Cardiac septum (tissue), 1 donor: ENCODE measurements at regions of chr17 and their contacts with region 1.

Region 1: DNA sequence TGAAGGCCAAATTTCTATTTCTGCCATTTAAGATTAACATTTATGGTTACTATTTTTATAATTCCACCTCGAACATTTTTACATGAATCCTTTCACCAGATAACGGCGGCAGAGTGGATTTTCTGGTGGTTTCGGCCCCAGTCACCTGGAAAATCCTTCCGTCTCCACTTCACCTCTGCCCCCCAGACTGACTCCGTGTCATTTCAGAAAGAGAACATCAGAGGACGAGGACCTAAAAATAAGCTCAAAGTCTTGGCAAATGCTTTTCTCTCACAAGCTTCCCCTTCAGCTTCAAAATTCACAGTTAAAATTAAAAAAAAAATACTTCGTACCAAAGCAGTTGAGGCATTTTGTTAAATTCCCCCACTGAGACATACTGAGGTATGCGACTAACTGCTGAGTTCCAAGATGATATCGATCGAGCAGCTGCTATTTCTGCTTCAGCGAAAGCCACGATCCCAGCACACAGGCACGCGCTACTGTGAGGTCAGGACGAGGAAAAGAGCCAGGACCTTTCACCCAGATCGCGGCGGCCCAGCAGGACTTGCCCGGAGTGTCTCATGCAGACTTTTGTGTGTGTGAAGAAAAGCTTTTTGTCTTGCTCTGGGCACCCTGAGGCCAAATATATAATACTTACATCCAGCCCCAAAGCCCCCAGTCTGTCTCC is 36.8 kb downstream of the ASPA start:
- DNase-seq: peak; percentile 87

Region 2: GRCh38 chr17:3474212-3474611 is 38.4 kb before region 1 on chr17:
- intact Hi-C with region 1: no loop called
- DNase-seq: no peak

Region 3: DNA sequence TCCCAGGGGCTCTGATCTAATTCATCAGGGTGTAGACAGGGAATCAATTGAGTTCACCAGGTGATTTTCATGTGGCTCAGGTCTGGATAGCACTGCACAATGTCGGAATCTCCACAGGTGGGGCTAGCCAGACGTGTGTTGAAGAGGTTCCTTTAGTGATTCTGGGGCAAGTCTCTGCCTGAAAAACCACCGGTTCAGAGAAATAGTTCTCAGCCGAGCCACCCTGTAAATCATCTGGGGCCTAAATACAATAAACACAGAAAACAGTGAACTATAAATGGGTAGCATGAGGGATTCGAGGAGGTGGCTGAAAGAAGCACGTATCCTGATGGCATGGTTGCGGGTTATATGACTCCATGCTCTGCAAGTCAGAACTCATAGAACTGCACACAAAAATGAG is 15.5 kb before region 1 on chr17:
- intact Hi-C with region 1: no loop called
- DNase-seq: no peak

Region 4: GRCh38 chr17:3529817-3530741 is 17.4 kb after region 1 on chr17:
- intact Hi-C with region 1: loop called (anchors 2 kb)
- DNase-seq: no peak

Region 5: DNA sequence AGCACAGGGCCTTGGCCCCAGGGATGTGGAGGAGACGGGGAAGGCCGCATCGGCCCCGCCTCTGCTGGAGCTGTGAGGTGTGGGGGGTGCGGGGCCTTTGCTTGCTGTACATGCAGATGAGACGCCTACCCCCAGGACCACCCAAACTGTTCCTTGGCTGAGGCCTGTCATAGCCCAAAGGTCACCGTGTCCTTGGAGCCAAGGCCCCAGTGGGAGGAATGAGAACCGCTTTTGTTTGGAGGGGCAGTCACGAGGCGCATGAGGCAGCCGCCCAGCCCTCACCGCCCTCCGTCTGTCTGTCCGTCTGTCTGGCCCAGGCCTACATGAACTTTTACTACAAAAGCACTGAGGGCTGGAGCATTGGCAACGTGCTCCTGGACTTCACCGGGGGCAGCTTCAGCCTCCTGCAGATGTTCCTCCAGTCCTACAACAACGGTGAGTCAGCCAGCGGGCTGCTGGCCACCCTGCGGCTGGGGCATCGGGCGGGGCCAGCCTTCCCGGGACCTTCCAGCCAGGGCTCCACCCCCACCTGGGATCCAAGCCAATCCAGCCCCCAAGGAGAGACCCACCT is 147.0 kb after region 1 on chr17:
- intact Hi-C with region 1: no loop called
- DNase-seq: peak; percentile 86